HEK293 (cell line): ENCODE measurements at regions of chr6 and their contacts with region 1.

Region 1: DNA sequence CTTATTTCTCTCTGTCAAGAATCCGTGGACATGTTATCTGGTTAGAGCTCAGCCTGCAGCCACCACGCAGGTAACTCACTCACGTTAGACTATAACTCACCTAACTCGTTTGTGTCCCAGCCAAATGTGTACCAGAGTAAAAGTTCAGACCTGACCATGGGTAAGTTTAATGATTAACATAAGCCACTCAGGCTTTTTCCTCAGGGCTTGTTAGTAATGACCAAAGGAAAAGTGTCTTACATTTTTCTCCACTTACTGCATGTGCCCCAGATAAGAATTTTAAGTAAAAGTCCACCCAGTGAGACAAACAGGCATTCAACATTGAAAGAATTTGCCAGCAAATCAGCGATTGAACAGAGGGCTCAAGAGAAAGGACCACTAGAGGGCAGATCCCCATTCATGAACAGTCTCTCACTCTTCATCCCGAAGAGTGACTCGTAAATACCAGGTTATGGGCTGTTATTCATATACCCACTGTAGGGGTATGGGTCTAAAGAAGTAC is at the start of gene PKHD1:
- H3K4me3 ChIP-seq: no peak within 1 kb of the TSS
- H3K27ac ChIP-seq: no peak within 1 kb of the TSS
- H3K4me1 ChIP-seq: peaks cover 4% of the 10 kb centered on the region; the same call in 1 of the 2 replicates
- CTCF ChIP-seq: peak; percentile 19; the same call in 1 of the 2 replicates

Region 2: DNA sequence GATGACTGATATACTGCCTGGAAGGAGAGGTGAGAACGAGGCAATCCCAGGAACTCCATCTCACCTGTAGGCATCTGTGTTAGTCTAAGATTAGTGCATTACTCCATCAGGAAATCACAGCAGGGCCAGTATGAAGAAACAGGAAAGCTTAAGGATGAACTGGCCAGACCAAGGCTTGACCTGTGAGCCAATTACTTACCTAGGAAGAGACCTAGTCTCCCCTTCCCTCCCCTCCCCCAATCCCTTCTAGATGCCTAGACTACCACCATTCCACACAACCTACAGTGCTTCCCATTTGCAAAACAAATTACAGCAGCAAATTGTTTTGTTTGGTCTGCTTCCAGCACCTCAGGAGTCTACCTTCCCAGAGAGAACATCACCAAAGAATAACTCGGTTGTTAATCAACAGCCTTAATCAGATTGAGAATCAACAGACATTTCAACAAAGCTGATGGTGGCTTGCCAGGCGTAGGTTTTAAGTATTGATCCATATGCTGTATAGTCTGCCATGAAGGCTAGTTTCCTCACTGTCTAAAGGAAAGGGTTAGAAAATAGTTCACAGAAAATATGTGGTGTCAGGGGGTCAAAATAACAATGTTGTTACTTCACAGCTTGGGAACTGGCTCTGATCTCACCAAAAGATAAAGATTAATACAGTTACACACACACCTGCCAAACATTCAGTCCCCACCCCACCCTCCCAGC is 10.2 kb before region 1 on chr6:
- CTCF ChIA-PET with region 1: interaction called, 10 read pairs
- POLR2A ChIA-PET with region 1: no interaction called
- H3K4me3 ChIP-seq: no peak overlapping the region
- H3K27ac ChIP-seq: no peak overlapping the region
- H3K4me1 ChIP-seq: peaks cover 24% of the 10 kb centered on the region
- CTCF ChIP-seq: no peak